ENCODE measurements at regions of chr19 and their contacts with region 1.

Region 1: DNA sequence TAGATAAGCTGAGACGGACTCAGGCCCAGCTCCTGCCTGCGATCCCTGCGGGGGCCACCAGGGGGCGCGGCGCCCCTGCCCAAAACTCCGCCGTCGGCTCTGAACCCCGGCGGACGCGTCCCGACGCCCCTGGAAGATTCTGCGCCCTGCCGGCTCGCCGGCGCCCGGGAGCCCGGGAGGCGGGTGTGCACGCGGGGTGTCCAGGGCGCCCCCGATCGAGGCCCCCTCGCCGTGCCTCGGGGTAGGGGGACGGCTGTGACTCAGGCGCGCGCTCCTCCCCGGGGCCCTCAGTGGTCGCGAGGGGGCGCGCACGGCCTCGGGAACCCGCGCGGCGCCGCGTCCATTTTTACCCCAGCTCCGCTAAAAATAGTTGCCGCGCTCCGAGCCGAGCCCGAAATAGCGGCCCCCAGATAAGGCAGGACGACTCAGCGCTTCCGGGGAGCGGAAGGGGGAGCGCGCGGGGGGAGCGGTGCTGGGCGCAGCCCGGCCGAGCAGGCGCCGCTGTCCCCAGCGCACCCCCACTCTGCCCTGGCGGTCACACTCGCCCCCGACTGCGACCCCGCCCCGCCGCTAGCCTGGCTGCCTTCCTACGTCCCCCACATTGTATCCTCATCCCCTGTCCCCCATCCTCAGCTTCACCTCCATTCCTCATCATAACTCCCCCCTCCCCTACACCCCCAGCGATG is 16.0 kb upstream of the ERCC1 start:
- DNase-seq: peak; percentile 87
- H3K4me3 Mint-ChIP-seq: peak overlapping the region; percentile 51
- H3K27ac Mint-ChIP-seq: peak overlapping the region; percentile 55
- H3K4me1 Mint-ChIP-seq: peaks cover 25% of the 10 kb centered on the region
- H3K27me3 Mint-ChIP-seq: no peaks in the 10 kb centered on the region

Region 2: GRCh38 chr19:45380107-45380506 is 59.6 kb before region 1 on chr19:
- CTCF ChIA-PET with region 1: no interaction called
- POLR2A ChIA-PET with region 1: no interaction called
- intact Hi-C with region 1: no loop called
- DNase-seq: no peak
- H3K4me3 Mint-ChIP-seq: no peak overlapping the region
- H3K27ac Mint-ChIP-seq: no peak overlapping the region
- H3K4me1 Mint-ChIP-seq: peaks cover 18% of the 10 kb centered on the region
- H3K27me3 Mint-ChIP-seq: peaks cover 6% of the 10 kb centered on the region

Region 3: GRCh38 chr19:45455707-45456499 is 16.2 kb after region 1 on chr19:
- CTCF ChIA-PET with region 1: interaction called, 13 read pairs
- POLR2A ChIA-PET with region 1: interaction called, 4 read pairs
- intact Hi-C with region 1: no loop called
- DNase-seq: peak; percentile 84
- H3K4me3 Mint-ChIP-seq: no peak overlapping the region
- H3K27ac Mint-ChIP-seq: peak overlapping the region; percentile 56
- H3K4me1 Mint-ChIP-seq: peaks cover 29% of the 10 kb centered on the region
- H3K27me3 Mint-ChIP-seq: no peaks in the 10 kb centered on the region

Region 4: GRCh38 chr19:45478454-45479238 is 38.9 kb after region 1 on chr19:
- CTCF ChIA-PET with region 1: interaction called, 420 read pairs
- POLR2A ChIA-PET with region 1: interaction called, 32 read pairs
- intact Hi-C with region 1: loop called (anchors 1 kb)
- DNase-seq: peak; percentile 96
- H3K4me3 Mint-ChIP-seq: peak overlapping the region; percentile 61
- H3K27ac Mint-ChIP-seq: peak overlapping the region; percentile 95
- H3K4me1 Mint-ChIP-seq: peaks cover 27% of the 10 kb centered on the region
- H3K27me3 Mint-ChIP-seq: no peaks in the 10 kb centered on the region

Region 5: DNA sequence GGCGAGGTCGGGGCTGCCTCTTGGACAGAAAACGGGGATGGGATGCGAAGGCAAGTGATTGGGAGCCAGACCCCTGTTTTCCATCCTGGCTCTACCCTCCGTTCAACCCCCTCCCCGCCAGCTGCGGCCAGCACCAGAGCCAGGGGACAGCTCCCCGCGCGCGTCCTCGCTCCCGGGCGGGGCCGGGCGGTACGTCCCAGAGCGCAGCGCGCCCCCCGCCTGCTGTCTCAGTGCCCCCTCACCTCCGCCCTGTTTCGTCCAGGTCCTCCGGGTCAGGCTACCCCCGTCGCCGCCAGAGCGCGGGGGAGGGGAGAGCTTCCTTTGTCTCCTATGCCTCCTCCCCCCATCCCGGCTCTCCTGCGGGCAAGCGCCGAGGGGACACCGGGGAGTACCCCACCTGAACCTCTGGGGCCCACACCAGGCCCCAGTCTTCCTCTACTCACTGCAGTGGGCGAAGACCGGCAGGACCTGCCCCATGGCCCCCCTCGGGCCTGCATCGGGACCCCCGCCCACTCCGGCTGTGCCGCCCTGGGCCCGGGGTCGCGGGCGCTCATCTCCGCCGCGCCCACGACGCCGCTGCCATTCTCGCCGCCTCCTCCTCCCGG is 56.7 kb after region 1 on chr19:
- CTCF ChIA-PET with region 1: interaction called, 23 read pairs
- POLR2A ChIA-PET with region 1: no interaction called
- intact Hi-C with region 1: no loop called
- DNase-seq: peak; percentile 60
- H3K4me3 Mint-ChIP-seq: peak overlapping the region; percentile 50
- H3K27ac Mint-ChIP-seq: no peak overlapping the region
- H3K4me1 Mint-ChIP-seq: peaks cover 33% of the 10 kb centered on the region
- H3K27me3 Mint-ChIP-seq: peaks cover 25% of the 10 kb centered on the region

Region 6: GRCh38 chr19:45591004-45591637 is 151.4 kb after region 1 on chr19:
- CTCF ChIA-PET with region 1: no interaction called
- POLR2A ChIA-PET with region 1: no interaction called
- intact Hi-C with region 1: no loop called
- DNase-seq: peak; percentile 73
- H3K4me3 Mint-ChIP-seq: no peak overlapping the region
- H3K27ac Mint-ChIP-seq: no peak overlapping the region
- H3K4me1 Mint-ChIP-seq: peaks cover 10% of the 10 kb centered on the region
- H3K27me3 Mint-ChIP-seq: peaks cover 27% of the 10 kb centered on the region